GM12878 (cell line): ENCODE measurements at regions of chr21 and their contacts with region 1.

Region 1: DNA sequence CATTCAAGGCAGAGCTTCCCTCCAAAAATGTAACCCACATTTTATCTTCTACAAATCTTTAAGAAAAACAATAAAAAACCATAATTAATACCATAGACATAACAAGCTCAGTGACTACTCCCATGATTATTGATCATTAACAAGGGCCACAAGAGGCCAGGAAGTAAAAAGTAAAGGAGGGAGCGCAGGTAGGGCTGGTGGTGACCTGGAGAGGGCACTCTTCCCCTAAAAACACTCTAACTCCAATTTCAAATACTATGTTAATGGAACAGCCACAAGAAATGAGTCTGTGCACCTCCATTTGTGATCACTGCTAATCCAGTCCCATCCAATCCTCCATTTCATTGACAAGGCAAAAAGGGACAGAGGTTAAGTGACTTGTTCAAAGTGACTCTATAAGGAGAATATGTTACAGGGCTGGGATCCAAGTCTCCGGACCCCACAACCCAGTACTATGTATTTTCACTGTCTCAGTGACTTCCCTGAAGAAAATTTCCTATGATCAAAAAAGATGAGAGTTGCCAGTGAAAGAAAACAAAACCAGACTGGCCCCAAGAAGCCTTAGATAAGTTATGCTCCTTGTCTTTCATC is 41.2 kb upstream of the CFAP298 start:
- DNase-seq: no peak
- ATAC-seq: peak; percentile 94
- H3K4me3 ChIP-seq: no peak overlapping the region
- H3K27ac ChIP-seq: no peak overlapping the region
- H3K4me1 ChIP-seq: peaks cover 5% of the 10 kb centered on the region
- H3K27me3 ChIP-seq: no peaks in the 10 kb centered on the region
- CTCF ChIP-seq: peak; percentile 66 to 78 (median 74); a peak in 5 of 6 replicates
- EP300 ChIP-seq: no peak
- POLR2A ChIP-seq: no peak
- RAD21 ChIP-seq: peak; percentile 66

Region 2: GRCh38 chr21:32611471-32611997 is 41.9 kb before region 1 on chr21:
- CTCF ChIA-PET with region 1: no interaction called
- POLR2A ChIA-PET with region 1: no interaction called
- RAD21 ChIA-PET with region 1: no interaction called
- SMC1A ChIA-PET with region 1: no interaction called
- in situ Hi-C with region 1: no loop called
- intact Hi-C with region 1: no loop called
- DNase-seq: no peak
- ATAC-seq: peak; percentile 52
- H3K4me3 ChIP-seq: peak overlapping the region; percentile 90
- H3K27ac ChIP-seq: peak overlapping the region; percentile 39
- H3K4me1 ChIP-seq: no peaks in the 10 kb centered on the region
- H3K27me3 ChIP-seq: no peaks in the 10 kb centered on the region
- CTCF ChIP-seq: no peak
- EP300 ChIP-seq: no peak
- POLR2A ChIP-seq: no peak
- RAD21 ChIP-seq: no peak

Region 3: DNA sequence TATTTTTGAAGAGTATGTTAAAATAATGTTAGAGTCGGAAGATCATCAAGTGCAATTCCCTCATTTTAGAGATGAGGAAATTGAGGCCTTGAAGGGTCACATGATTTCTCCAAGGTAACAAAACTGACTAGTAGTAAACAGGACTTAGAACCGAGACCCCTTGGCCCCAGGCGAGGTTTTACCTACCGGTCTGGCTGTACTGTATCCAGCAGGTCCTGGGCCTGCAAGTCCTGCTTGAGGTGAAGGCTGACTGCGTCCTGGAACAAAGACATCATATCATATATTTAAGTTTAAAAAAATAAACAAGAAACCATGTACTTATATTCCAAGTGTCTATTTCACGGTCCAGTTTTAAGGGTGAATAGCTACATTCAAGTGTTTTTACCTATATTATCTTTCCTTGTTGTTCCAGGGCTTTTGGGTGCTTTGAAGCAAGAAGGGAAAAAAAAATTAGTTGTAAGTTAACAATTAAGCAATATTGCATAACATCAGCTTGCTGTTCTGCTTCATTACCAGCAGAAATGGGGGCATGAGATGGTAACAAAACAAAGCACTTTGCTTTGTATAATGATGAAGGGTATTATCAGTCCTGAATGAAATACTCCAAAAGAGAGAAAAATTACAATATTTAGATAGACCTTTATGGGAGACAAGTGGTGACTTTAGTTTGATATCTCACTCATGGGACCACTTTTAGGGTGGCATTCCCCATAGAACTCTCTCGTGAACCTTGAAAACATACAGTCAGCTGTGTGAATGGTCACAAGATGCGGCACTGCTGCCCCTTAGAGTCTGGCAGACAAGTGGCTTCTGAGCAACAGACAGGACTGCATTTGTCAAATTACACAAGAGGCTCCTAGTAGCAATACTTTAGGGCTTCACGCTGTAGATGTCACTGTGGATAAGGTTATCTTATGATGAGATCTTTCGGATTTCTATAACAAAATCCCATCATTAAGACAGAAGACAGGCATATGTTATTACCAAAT is 11.4 kb before region 1 on chr21:
- CTCF ChIA-PET with region 1: no interaction called
- POLR2A ChIA-PET with region 1: no interaction called
- RAD21 ChIA-PET with region 1: no interaction called
- SMC1A ChIA-PET with region 1: no interaction called
- in situ Hi-C with region 1: no loop called
- intact Hi-C with region 1: no loop called
- DNase-seq: no peak
- ATAC-seq: no peak
- H3K4me3 ChIP-seq: no peak overlapping the region
- H3K27ac ChIP-seq: no peak overlapping the region
- H3K4me1 ChIP-seq: no peaks in the 10 kb centered on the region
- H3K27me3 ChIP-seq: no peaks in the 10 kb centered on the region
- CTCF ChIP-seq: no peak
- EP300 ChIP-seq: no peak
- POLR2A ChIP-seq: no peak
- RAD21 ChIP-seq: no peak

Region 4: DNA sequence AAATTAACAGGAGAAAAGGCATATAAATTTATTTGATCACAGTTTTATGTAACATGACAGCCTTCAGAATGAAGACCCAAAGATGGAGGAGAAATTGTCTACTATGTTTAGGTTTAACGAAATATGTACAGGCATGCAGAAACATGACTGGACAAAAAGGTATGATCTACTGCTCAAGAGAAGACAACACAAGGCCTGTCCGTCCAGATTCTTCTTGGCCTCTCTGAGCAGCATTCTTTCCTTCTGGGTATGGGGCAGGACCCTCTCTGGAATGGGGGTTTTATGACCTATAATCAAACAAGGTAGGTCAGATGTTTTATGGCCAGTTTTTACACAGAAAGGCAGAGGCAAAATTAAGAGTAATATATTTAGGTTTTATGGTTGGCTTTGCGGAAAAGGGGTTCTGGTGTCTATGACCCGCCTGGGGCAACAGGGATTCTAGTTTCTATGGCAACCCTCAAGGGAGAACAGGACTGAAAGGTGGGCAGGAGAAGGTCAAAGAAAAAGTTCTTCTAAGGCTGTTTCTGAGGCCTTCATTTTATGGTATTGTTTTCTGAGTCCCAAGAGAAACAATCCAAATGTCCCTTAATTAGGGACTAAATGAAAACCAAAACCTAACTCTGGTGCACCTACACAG is 88.0 kb after region 1 on chr21:
- CTCF ChIA-PET with region 1: no interaction called
- POLR2A ChIA-PET with region 1: no interaction called
- RAD21 ChIA-PET with region 1: no interaction called
- SMC1A ChIA-PET with region 1: no interaction called
- in situ Hi-C with region 1: no loop called
- intact Hi-C with region 1: loop called (anchors 5 kb)
- DNase-seq: no peak
- ATAC-seq: no peak
- H3K4me3 ChIP-seq: no peak overlapping the region
- H3K27ac ChIP-seq: no peak overlapping the region
- H3K4me1 ChIP-seq: no peaks in the 10 kb centered on the region
- H3K27me3 ChIP-seq: no peaks in the 10 kb centered on the region
- CTCF ChIP-seq: no peak
- EP300 ChIP-seq: no peak
- POLR2A ChIP-seq: no peak
- RAD21 ChIP-seq: no peak

Region 5: DNA sequence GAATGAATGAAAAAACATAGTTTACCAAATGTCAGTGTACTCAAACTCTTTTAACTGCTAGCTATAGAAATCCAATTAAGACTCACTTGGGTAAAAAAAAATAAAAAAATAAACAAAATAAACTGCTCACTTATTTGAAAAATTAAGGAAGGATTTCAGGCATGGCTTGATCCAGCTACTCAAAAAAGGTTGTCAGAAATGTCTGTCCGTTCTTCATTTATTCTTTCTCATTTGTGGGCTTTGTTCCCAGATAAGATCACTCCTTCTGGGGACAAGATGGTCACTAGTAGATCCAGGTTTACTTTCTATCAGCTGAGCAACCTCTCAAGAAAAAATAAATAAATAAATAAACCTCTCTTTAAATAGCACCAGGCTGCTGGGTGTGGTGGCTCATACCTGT is 144.3 kb after region 1 on chr21:
- CTCF ChIA-PET with region 1: no interaction called
- POLR2A ChIA-PET with region 1: no interaction called
- RAD21 ChIA-PET with region 1: no interaction called
- SMC1A ChIA-PET with region 1: no interaction called
- in situ Hi-C with region 1: no loop called
- intact Hi-C with region 1: no loop called
- DNase-seq: no peak
- ATAC-seq: no peak
- H3K4me3 ChIP-seq: no peak overlapping the region
- H3K27ac ChIP-seq: no peak overlapping the region
- H3K4me1 ChIP-seq: no peaks in the 10 kb centered on the region
- H3K27me3 ChIP-seq: no peaks in the 10 kb centered on the region; a peak in 1 of 4 replicates
- CTCF ChIP-seq: no peak
- EP300 ChIP-seq: no peak
- POLR2A ChIP-seq: no peak
- RAD21 ChIP-seq: no peak

Region 6: GRCh38 chr21:32826329-32827167 is 173.1 kb after region 1 on chr21:
- CTCF ChIA-PET with region 1: interaction called, 31 read pairs
- POLR2A ChIA-PET with region 1: interaction called, 5 read pairs
- RAD21 ChIA-PET with region 1: interaction called, 5 read pairs
- SMC1A ChIA-PET with region 1: interaction called, 5 read pairs
- in situ Hi-C with region 1: loop called (anchors 10 kb)
- intact Hi-C with region 1: loop called (anchors 1 kb)
- DNase-seq: peak; percentile 13
- ATAC-seq: peak; percentile 98
- H3K4me3 ChIP-seq: no peak overlapping the region
- H3K27ac ChIP-seq: no peak overlapping the region
- H3K4me1 ChIP-seq: no peaks in the 10 kb centered on the region
- H3K27me3 ChIP-seq: peaks cover 0 to 2% of the 10 kb centered on the region in 2 experiments; a peak in 1 of 4 replicates
- CTCF ChIP-seq: peak; percentile 65 to 76 (median 71)
- EP300 ChIP-seq: no peak
- POLR2A ChIP-seq: no peak
- RAD21 ChIP-seq: peak; percentile 85